Transverse colon (tissue), 4 donors: ENCODE measurements at regions of chr13 and their contacts with region 1.

Region 1: GRCh38 chr13:78700121-78700910 is 41.4 kb upstream of the OBI1 start:
- DNase-seq: no peak
- H3K4me3 ChIP-seq: no peak overlapping the region
- H3K27ac ChIP-seq: no peak overlapping the region
- H3K4me1 ChIP-seq: no peaks in the 10 kb centered on the region
- H3K27me3 ChIP-seq: no peaks in the 10 kb centered on the region
- CTCF ChIP-seq: no peak
- EP300 ChIP-seq: no peak
- POLR2A ChIP-seq: no peak

Region 2: GRCh38 chr13:78491978-78492377 is 208.3 kb before region 1 on chr13:
- in situ Hi-C with region 1: no loop called
- intact Hi-C with region 1: no loop called
- DNase-seq: no peak
- H3K4me3 ChIP-seq: no peak overlapping the region
- H3K27ac ChIP-seq: no peak overlapping the region
- H3K4me1 ChIP-seq: no peaks in the 10 kb centered on the region
- H3K27me3 ChIP-seq: no peaks in the 10 kb centered on the region
- CTCF ChIP-seq: no peak
- EP300 ChIP-seq: no peak
- POLR2A ChIP-seq: no peak

Region 3: DNA sequence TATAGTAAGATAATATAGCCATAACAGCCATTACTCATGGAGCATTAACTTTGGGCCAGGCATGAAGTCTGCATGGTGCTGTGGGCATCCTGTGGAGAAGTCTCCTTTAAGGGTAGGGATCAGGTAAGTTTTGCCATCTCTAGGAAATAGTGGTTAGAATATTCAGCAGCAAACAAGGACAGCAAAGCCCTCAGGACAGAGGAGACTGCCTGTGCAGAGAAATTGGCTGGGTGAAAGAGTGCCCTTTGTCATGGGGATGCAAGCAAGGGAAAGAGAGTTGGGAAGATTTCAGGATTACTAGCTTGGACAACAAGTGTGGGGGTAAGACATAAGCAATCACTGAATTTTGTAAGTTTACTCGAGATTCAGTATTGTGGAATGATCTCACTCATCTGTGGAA is 25.7 kb before region 1 on chr13:
- in situ Hi-C with region 1: no loop called
- intact Hi-C with region 1: loop called (anchors 1 kb)
- DNase-seq: no peak
- H3K4me3 ChIP-seq: no peak overlapping the region
- H3K27ac ChIP-seq: no peak overlapping the region
- H3K4me1 ChIP-seq: no peaks in the 10 kb centered on the region
- H3K27me3 ChIP-seq: peaks cover 24% of the 10 kb centered on the region
- CTCF ChIP-seq: no peak
- EP300 ChIP-seq: no peak
- POLR2A ChIP-seq: no peak